AG04449 (cell line): ENCODE measurements at regions of chr1 and their contacts with region 1.

Region 1: GRCh38 chr1:24930204-24931145 is at the start of gene RUNX3:
- DNase-seq: no peak
- H3K4me3 ChIP-seq: peak within 1 kb of the TSS; percentile 66
- CTCF ChIP-seq: peak; percentile 28

Region 2: DNA sequence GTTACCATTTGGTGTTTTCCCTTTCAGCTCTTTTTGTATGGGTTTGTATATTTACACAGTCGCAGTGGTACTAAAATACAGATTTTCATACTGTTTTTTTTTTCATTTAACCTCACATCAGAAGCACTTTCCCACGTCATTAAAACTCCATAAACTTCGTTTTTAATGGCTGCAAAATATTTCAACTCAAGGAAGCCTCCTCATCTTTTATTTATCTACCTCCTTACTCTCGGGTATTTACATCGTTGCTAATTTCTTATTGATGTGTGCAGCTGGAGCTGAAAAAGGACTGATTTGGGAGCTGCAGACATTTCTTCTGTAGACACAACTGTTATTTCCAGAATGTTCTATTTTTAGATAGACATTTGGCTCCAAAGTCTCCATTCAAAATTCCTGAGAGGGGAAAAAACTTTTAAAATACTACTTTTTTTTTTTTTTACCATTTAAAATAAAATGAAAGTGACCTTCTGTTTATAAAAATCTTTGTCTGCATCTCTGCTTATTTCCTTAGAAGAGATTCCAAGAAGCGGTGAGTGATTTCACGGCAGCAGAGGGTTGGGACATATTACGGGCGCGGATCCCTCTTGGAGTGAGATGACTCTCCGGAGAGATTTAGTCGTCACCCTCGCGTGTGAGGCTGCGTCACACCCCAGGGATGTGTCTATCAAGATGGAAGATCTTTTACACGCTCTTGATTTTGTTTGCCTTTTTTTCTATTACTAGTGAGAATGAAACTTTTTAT is 10.5 kb before region 1 on chr1:
- CTCF ChIA-PET with region 1: interaction called, 36 read pairs
- POLR2A ChIA-PET with region 1: interaction called, 5 read pairs
- DNase-seq: no peak
- H3K4me3 ChIP-seq: no peak overlapping the region
- CTCF ChIP-seq: no peak

Region 3: GRCh38 chr1:24946861-24947658 is 16.6 kb after region 1 on chr1:
- CTCF ChIA-PET with region 1: interaction called, 45 read pairs
- POLR2A ChIA-PET with region 1: no interaction called
- DNase-seq: no peak
- H3K4me3 ChIP-seq: no peak overlapping the region
- CTCF ChIP-seq: no peak

Region 4: DNA sequence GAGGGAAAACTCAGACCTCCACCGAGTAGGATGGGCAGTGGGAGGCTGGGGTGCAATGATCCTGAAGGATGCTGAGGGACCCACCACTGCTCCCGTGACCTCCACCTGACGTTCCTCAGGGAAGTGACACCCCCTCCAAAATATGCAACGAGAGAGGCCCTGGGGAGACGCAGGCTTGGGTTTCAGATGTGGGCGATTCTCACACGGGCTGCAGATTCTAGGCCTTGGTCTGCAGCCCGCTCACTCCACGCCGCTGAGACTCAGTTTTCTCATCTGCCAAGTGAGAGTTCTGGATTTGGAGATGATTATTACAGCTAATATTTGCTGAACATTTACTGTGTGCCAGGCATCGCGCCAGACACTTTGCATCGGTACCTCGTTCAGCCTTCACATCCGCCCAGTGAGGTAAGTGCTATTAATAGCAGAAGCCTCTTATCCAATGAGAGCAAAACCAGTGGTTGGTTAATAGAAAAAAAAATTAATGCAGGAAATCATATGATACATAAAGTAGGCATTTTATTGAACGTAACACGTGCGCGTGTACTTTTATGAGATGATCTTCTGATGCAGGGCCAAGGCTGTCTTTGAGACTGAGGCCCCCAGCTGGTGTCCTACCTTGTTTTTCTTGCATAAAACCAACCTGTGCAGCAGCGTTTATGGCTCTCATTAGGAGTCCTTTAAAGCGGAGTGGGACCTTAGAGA is 101.6 kb after region 1 on chr1:
- CTCF ChIA-PET with region 1: interaction called, 164 read pairs
- POLR2A ChIA-PET with region 1: no interaction called
- DNase-seq: peak; percentile 33
- H3K4me3 ChIP-seq: no peak overlapping the region
- CTCF ChIP-seq: no peak

Region 5: GRCh38 chr1:25232027-25232865 is 301.8 kb after region 1 on chr1 and contains the start of gene SYF2:
- CTCF ChIA-PET with region 1: no interaction called
- POLR2A ChIA-PET with region 1: no interaction called
- DNase-seq: peak; percentile 62
- H3K4me3 ChIP-seq: peak within 1 kb of the TSS; percentile 99
- CTCF ChIP-seq: no peak